A673 (cell line): ENCODE measurements at regions of chr3 and their contacts with region 1.

Region 1: DNA sequence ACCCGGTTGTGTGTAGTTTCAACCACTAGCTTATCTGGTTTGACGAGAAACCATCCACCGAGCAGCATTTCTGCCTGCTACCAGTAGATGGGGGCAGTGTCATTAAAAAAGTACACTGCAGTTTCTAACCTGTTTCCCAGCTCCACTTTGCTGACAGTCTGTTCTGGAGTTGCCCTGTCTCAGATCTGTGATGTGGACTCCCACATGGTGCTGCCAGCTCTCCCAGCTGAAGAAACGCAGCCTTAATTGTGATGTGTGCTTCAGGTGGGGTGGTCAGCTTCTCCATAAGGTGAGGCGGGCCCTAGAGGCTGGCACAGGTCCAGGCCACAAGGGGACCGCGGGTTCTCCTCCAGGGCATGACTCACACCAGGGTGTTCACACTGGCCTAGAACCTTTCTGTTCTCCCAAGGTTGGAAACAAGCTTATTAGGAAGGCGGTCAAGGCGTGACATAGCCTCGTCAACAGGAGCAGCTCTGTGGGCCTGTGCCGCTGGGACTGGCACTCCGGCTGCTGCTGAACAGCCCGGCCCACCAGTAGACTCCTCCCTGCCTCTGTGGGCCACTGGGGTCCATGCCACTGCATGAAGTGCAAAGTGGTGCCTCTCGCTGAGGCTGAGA is 2.9 kb upstream of the FAM43A start:
- DNase-seq: peak; percentile 90
- H3K4me3 ChIP-seq: no peak overlapping the region
- H3K27ac ChIP-seq: no peak overlapping the region
- H3K4me1 ChIP-seq: peaks cover 6% of the 10 kb centered on the region
- H3K27me3 ChIP-seq: no peaks in the 10 kb centered on the region
- CTCF ChIP-seq: peak; percentile 92

Region 2: GRCh38 chr3:194871143-194871863 is 188.5 kb after region 1 on chr3:
- CTCF ChIA-PET with region 1: no interaction called
- POLR2A ChIA-PET with region 1: interaction called, 3 read pairs
- intact Hi-C with region 1: loop called (anchors 5 kb)
- DNase-seq: peak; percentile 94
- H3K4me3 ChIP-seq: no peak overlapping the region
- H3K27ac ChIP-seq: peak overlapping the region; percentile 16
- H3K4me1 ChIP-seq: peaks cover 33% of the 10 kb centered on the region
- H3K27me3 ChIP-seq: no peaks in the 10 kb centered on the region
- CTCF ChIP-seq: 0 out of 2 replicates have a peak, but pooled peaks have one; percentile 25

Region 3: DNA sequence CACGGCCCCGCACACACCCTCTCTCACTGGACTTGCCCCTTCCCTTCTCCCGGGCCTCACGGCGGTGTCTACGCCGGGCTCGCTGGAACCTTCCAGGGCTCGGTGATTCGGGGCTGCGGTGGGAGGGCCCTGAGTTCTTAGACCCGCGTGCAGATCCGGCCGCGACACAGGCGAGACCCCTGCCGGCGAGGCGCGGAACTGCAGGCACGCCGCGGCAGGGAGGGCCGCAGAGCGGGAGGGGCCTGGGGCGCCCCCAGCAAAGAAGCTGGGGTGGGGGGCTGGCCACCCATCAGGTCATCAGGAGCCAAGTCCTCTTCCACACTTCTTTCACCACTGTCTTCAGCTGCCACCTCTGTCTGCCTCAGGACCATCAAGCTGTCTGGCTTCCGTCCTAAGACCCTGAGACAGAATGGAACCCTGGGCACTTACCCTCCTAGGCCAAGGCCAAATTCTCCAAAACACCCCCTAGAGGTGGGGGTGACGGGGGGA is 423.7 kb after region 1 on chr3:
- CTCF ChIA-PET with region 1: interaction called, 6 read pairs
- POLR2A ChIA-PET with region 1: no interaction called
- intact Hi-C with region 1: loop called (anchors 1 kb)
- DNase-seq: peak; percentile 78
- H3K4me3 ChIP-seq: no peak overlapping the region
- H3K27ac ChIP-seq: no peak overlapping the region
- H3K4me1 ChIP-seq: peaks cover 49% of the 10 kb centered on the region
- H3K27me3 ChIP-seq: no peaks in the 10 kb centered on the region
- CTCF ChIP-seq: peak; percentile 98

Region 4: GRCh38 chr3:195271116-195271858 is 588.5 kb after region 1 on chr3 and contains the start of gene XXYLT1:
- CTCF ChIA-PET with region 1: interaction called, 18 read pairs
- POLR2A ChIA-PET with region 1: no interaction called
- intact Hi-C with region 1: no loop called
- DNase-seq: peak; percentile 95
- H3K4me3 ChIP-seq: peak within 1 kb of the TSS; percentile 67
- H3K27ac ChIP-seq: peak within 1 kb of the TSS; percentile 83
- H3K4me1 ChIP-seq: peaks cover 16% of the 10 kb centered on the region
- H3K27me3 ChIP-seq: no peaks in the 10 kb centered on the region
- CTCF ChIP-seq: peak; percentile 99
- total RNA-seq, gene XXYLT1: 49.8 and 53.9 TPM in 2 replicates

Region 5: GRCh38 chr3:195522254-195523023 is 839.6 kb after region 1 on chr3:
- CTCF ChIA-PET with region 1: no interaction called
- POLR2A ChIA-PET with region 1: no interaction called
- intact Hi-C with region 1: loop called (anchors 2 kb)
- DNase-seq: peak; percentile 64
- H3K4me3 ChIP-seq: no peak overlapping the region
- H3K27ac ChIP-seq: no peak overlapping the region
- H3K4me1 ChIP-seq: no peaks in the 10 kb centered on the region
- H3K27me3 ChIP-seq: no peaks in the 10 kb centered on the region
- CTCF ChIP-seq: peak; percentile 76